ENCODE measurements at regions of chr4 and their contacts with region 1.

Region 1: GRCh38 chr4:155403886-155404285 is 27.1 kb upstream of the MAP9 start:
- DNase-seq: no peak
- ATAC-seq: no peak

Region 2: DNA sequence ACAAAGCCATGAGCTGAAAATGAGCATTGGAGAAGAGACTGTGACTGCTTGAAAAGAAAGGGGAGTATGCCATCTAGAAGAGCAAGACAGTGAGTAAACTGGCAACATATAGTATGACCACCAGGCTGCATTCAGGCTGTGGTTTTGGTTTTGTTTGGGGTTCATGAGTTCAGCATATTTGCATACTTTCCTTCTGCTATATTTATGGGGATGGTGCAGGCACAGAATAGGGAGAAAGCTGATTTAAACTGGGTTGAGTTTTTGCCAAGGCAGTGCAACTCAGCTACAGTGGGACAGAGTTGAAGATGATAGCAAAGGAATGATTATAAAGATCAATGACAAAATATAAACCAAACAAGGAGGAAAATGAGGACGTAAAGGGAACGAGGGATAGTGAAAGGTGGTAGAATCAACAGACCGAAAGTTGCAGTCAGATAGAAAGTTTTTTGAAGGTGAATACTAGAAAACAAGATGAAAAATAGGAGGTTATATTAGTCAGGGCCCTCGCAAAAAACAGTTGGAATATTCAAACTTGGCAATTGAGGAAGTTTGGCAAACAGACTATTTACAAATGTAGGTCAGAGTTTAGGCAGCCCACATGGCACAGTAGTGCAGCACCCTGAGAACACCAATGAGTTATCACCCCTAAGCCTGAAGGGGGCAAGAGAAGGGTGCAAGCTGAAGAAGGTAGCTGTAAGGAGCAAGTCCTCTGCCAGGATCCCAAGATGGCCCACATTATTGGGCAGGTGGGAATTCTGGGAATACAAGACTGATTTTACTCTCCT is 87.6 kb after region 1 on chr4:
- intact Hi-C with region 1: no loop called
- DNase-seq: no peak
- ATAC-seq: no peak

Region 3: DNA sequence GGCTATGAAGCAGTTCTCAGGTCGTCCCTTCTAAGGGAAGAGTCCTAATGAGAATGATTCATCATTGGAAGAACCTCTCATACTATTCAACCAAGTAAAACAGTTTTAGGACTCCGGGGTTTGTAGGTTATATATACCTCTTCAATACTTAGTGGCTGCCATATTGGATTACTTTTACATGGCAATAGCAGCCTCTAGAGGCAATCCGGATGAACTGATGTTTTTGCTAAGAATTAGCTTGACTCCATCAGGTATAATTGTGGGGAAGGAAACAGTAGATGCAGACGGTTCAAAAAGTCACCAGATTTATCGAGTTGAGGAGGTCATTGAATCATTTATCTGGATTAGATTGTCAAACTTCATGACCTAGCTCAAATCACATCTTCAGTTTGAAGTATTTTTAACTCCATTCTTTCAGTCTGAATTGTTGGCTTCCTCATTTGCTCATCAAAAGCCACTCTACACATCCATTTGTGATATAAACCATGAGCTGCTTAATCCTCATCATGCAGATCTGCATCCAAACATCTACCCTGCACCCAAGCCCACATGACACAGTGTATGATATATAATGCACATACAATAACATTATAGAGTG is 383.3 kb after region 1 on chr4:
- intact Hi-C with region 1: loop called (anchors 1 kb)
- DNase-seq: no peak
- ATAC-seq: peak; percentile 78